Activated naive CD4-positive, alpha-beta T cell treated with anti-CD3 and anti-CD28 coated beads for 36 hours (primary cell): ENCODE measurements at regions of chr7 and their contacts with region 1.

Region 1: DNA sequence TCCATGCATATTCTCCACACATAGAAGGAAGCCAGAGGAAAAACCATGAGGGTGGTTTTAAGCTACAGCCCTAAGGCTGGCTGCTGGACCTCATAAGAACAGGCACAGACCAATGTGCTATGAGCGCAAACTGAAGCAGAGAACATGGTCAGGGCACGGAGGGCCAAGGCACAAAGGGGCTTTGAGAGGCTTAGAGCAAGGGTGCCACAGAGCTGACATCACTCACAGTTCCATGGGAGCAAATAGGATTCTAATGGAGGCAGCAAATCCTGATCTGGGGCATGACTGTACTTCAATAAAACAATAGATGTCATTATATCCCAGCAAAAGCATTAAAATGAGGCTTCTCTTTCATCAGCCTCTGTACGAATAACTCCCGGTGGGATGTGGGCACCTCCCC is 162.4 kb downstream of the COBL start:
- DNase-seq: no peak
- H3K4me3 Mint-ChIP-seq: no peak overlapping the region
- H3K27ac Mint-ChIP-seq: no peak overlapping the region
- H3K4me1 Mint-ChIP-seq: no peaks in the 10 kb centered on the region
- H3K27me3 Mint-ChIP-seq: peaks cover 9% of the 10 kb centered on the region

Region 2: DNA sequence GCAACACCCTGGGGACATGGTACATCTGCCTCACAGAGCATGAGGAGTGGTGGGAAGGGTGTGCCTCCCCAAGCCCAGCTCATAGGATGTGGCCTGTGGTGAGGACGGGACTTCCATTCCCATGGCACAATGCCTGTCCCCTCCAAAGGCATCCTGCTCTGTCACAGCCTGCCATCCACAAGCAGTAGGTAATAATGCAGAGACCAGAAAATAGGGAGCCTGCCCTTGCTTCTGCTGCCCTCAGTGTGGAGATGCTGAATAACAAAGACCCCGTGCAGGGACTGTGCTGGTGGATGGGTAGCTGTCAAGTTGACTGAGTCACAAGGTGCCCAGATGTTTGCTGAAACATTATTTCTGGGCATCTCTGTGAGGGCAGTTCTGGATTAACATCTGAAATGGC is 171.6 kb before region 1 on chr7:
- CTCF ChIA-PET with region 1: no interaction called
- intact Hi-C with region 1: loop called (anchors 10 kb)
- DNase-seq: no peak
- H3K4me3 Mint-ChIP-seq: no peak overlapping the region
- H3K27ac Mint-ChIP-seq: no peak overlapping the region
- H3K4me1 Mint-ChIP-seq: no peaks in the 10 kb centered on the region
- H3K27me3 Mint-ChIP-seq: peaks cover 3% of the 10 kb centered on the region

Region 3: DNA sequence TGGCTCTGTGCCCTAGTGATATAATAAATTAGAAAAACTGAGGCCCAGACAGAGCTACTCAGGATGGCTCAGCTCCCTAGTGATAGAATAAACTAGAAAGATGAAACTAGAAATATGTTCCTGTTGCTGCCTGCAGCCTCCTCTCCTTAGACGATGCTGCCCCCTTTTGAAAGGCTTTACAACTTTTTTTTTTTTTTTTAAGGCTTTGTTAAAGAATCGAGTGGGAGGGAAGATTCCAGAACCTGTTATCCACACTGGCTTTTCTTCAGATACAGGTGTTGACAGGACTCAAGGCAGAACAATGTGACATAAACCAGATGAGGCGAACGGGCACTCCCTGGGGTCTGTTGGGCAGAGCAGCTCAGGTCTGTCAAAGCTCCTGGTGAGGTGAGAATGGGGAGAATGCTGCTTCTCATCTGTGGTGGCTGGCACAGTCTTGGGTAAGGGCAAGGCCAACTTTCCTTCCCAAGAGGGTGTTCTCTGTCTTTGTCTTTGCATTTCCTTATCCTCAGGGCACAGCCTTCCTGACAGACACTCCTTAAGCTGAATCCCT is 12.7 kb before region 1 on chr7:
- CTCF ChIA-PET with region 1: interaction called, 18 read pairs
- intact Hi-C with region 1: no loop called
- DNase-seq: peak; percentile 31
- H3K4me3 Mint-ChIP-seq: no peak overlapping the region
- H3K27ac Mint-ChIP-seq: no peak overlapping the region
- H3K4me1 Mint-ChIP-seq: peaks cover 14% of the 10 kb centered on the region
- H3K27me3 Mint-ChIP-seq: no peaks in the 10 kb centered on the region